ENCODE measurements at regions of chr14 and their contacts with region 1.

Region 1: DNA sequence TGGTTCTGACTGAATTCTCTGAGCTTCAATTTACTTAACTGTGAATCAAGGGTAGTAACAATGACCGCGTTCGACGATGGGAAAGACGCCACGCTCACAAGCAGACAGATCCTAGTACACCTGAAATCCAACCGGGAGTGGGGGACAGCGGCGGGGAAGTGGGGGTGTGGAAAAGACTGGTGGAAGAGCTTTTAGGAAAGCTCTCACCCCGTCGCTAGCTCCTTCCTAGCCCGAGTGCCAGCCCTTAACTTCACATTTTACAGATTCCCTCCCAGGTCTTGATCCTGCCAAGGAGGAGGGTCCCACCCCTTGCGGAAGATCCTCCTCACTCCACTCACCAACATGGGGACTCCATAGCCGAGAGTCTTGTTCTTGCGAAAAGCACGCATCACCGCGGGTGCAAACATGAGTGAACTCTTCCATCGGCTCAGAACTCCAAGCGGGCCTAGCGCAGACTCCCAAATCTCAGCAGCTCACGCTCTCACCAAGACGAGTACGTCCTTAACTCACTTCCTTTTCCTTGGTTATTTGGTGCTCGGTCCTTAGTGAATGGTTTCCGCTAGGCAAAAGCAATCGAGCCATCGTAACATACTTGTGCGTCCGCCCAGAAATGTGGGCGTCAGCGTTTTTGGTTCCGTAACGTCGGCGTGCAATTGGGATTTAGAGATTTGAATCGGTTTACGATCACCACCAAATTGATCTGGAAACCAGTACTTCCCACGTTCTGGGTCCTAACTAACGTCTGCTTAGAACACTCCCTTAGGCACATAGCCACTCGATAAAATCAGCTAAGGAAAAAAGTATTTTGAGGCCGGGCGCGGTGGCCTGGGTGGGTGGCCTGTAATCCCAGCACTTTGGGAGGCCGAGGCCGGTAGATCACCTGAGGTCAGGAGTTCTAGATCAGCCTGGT is at the start of gene COX16:
- DNase-seq: peak; percentile 90
- H3K4me3 Mint-ChIP-seq: peak within 1 kb of the TSS; percentile 99
- H3K27ac Mint-ChIP-seq: peak within 1 kb of the TSS; percentile 89
- H3K4me1 Mint-ChIP-seq: peaks cover 33% of the 10 kb centered on the region
- H3K27me3 Mint-ChIP-seq: no peaks in the 10 kb centered on the region
- total RNA-seq, gene COX16: 54.6 to 56.5 TPM

Region 2: DNA sequence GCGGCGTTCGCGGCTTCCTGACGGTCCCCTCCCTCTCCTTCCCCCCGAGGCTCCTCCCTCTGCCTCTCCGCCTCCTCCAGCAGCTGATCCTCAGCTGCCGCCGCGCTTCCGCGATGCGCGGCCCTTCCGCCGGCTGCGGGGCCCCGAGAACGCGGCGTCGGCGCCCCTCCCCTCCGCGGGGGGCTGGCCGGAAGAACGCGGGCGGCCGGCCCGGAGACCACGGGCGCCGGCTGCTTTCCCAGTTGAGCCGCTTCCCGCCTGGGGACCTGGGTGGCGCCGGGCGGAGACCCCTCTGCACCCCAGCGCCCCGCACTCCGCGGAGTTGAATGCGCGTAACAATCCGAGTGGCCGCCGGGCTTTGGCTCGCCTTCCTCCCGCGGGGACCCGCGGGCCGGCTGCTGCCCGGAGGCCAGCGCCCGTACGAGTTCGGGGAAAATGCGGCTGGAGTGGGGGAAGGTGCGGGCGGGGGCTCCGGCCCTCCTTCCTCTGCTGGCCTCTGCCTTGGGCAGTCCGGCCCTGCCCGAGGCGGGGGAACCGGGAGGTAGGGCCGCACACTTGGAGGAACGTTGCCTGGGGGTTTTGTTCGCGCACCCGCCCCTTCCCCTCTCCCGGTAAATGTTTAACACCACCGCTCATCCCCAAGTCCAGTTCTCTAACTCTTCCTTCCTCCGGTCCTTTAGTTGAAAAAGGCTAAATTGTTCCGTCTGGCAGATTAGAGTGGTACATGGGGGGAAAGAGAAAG is 1206.1 kb before region 1 on chr14:
- CTCF ChIA-PET with region 1: no interaction called
- POLR2A ChIA-PET with region 1: no interaction called
- intact Hi-C with region 1: loop called (anchors 5 kb)
- DNase-seq: peak; percentile 96
- H3K4me3 Mint-ChIP-seq: peak overlapping the region; percentile 91
- H3K27ac Mint-ChIP-seq: peak overlapping the region; percentile 92
- H3K4me1 Mint-ChIP-seq: peaks cover 33% of the 10 kb centered on the region
- H3K27me3 Mint-ChIP-seq: no peaks in the 10 kb centered on the region

Region 3: DNA sequence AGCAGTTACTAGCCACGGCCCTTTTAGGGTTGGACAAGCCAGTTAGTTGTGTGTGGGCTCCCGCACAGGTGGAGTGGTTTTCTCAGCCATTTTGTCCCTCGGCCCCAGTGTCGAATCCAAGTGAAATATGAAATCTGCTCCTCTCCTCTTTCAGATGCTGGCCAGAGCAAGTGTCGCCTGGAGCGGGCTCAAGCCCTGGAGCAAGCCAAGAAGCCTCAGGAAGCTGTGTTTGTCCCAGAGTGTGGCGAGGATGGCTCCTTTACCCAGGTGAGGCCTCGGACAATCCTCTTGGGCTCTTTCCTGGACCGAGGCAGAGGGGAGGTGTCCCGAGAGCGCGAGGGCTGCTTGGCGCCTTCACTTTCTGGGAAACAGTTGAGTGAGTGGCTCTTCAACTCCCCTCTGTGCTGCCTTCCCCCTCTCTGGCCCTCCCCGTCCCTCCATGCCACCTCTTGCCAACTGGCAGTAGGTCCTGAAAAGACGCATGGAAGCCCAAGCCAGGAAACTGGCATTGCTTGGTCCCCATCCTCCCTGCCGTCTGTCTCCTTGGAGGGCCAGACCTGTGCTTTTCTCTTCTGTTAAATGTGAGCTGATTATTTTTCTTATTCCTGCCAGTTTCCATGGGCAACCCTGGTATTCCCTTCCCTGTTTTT is 406.0 kb before region 1 on chr14:
- CTCF ChIA-PET with region 1: no interaction called
- POLR2A ChIA-PET with region 1: no interaction called
- intact Hi-C with region 1: no loop called
- DNase-seq: no peak
- H3K4me3 Mint-ChIP-seq: no peak overlapping the region
- H3K27ac Mint-ChIP-seq: no peak overlapping the region
- H3K4me1 Mint-ChIP-seq: no peaks in the 10 kb centered on the region
- H3K27me3 Mint-ChIP-seq: peaks cover 16% of the 10 kb centered on the region

Region 4: DNA sequence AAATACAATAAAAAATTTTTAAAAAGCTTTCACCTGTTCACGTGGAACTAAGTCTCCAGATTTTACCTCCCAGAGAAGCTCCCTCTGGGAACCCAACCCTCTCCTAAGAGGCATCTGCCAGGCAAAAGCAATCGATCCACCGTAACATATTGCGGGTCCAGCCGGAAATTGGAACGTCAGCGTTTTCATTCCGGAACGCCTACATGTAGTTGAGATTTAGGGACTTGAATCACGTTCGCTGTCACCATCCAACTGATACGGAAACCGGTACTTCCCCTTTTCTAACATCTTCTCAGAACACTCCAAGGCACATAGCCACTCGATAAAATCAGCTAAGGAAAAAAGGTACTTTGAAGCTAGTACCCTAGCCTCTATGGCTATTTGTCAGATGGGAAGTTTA is 70.3 kb before region 1 on chr14:
- CTCF ChIA-PET with region 1: interaction called, 5 read pairs
- POLR2A ChIA-PET with region 1: interaction called, 4 read pairs
- intact Hi-C with region 1: loop called (anchors 1 kb)
- DNase-seq: peak; percentile 70
- H3K4me3 Mint-ChIP-seq: no peak overlapping the region
- H3K27ac Mint-ChIP-seq: no peak overlapping the region
- H3K4me1 Mint-ChIP-seq: peaks cover 3% of the 10 kb centered on the region
- H3K27me3 Mint-ChIP-seq: peaks cover 7% of the 10 kb centered on the region

Region 5: GRCh38 chr14:70416725-70417349 is 57.4 kb after region 1 on chr14 and contains the start of gene SYNJ2BP:
- CTCF ChIA-PET with region 1: no interaction called
- POLR2A ChIA-PET with region 1: no interaction called
- intact Hi-C with region 1: loop called (anchors 5 kb)
- DNase-seq: peak; percentile 69
- H3K4me3 Mint-ChIP-seq: peak within 1 kb of the TSS; percentile 83
- H3K27ac Mint-ChIP-seq: peak within 1 kb of the TSS; percentile 47
- H3K4me1 Mint-ChIP-seq: peaks cover 22% of the 10 kb centered on the region
- H3K27me3 Mint-ChIP-seq: no peaks in the 10 kb centered on the region
- total RNA-seq, gene SYNJ2BP: 5.7 to 5.8 TPM

Region 6: GRCh38 chr14:70809543-70810244 is 450.3 kb after region 1 on chr14:
- CTCF ChIA-PET with region 1: interaction called, 3 read pairs
- POLR2A ChIA-PET with region 1: no interaction called
- intact Hi-C with region 1: loop called (anchors 5 kb)
- DNase-seq: peak; percentile 96
- H3K4me3 Mint-ChIP-seq: no peak overlapping the region
- H3K27ac Mint-ChIP-seq: no peak overlapping the region
- H3K4me1 Mint-ChIP-seq: peaks cover 6% of the 10 kb centered on the region
- H3K27me3 Mint-ChIP-seq: no peaks in the 10 kb centered on the region

Measured in activated CD4-positive, alpha-beta memory T cell treated with anti-CD3 and anti-CD28 coated beads for 36 hours (primary cell).